Mammary epithelial cell (primary cell): ENCODE measurements at regions of chr14 and their contacts with region 1.

Region 1: DNA sequence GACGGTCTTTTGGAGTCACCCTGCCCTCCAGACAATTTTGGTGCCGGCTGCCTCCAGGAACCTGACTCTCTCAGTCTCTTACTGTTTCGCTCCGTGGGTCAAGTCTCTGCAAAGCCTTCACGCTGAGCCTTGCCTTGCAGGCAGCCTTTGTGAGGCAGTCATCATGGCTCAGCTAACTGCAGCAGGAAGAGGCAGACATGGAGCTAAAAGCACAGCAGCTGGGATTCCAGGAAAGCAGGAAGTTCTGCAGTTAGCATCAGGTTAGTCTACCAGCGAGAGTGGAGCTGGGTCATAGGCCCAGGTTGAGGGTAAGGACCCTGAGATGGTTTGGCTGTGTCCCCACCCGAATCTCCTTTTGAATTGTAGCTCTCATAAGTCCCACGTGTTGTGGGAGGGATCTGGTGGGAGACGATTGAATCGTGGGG is 305.4 kb downstream of the PCNX1 start:
- DNase-seq: peak; percentile 10
- H3K4me3 ChIP-seq: no peak overlapping the region
- H3K27ac ChIP-seq: no peak overlapping the region
- H3K4me1 ChIP-seq: no peaks in the 10 kb centered on the region
- H3K27me3 ChIP-seq: no peaks in the 10 kb centered on the region
- CTCF ChIP-seq: no peak

Region 2: GRCh38 chr14:71271166-71271945 is 58.7 kb after region 1 on chr14:
- CTCF ChIA-PET with region 1: no interaction called
- dilution Hi-C with region 1: loop called (anchors 5 kb)
- in situ Hi-C with region 1: no loop called
- intact Hi-C with region 1: no loop called
- DNase-seq: no peak
- H3K4me3 ChIP-seq: no peak overlapping the region
- H3K27ac ChIP-seq: no peak overlapping the region
- H3K4me1 ChIP-seq: peaks cover 5% of the 10 kb centered on the region
- H3K27me3 ChIP-seq: no peaks in the 10 kb centered on the region
- CTCF ChIP-seq: no peak